Pancreas (tissue), 10 donors: ENCODE measurements at regions of chr4 and their contacts with region 1.

Region 1: GRCh38 chr4:85953651-85954018 is 406.2 kb downstream of the MAPK10 start:
- DNase-seq: no peak
- ATAC-seq: peak in 3 of 4 donors; percentile 20 to 55 (median 35)
- H3K4me3 ChIP-seq: no peak overlapping the region
- H3K27ac ChIP-seq: no peak overlapping the region
- H3K4me1 ChIP-seq: no peaks in the 10 kb centered on the region
- H3K27me3 ChIP-seq: no peaks in the 10 kb centered on the region
- CTCF ChIP-seq: no peak

Region 2: DNA sequence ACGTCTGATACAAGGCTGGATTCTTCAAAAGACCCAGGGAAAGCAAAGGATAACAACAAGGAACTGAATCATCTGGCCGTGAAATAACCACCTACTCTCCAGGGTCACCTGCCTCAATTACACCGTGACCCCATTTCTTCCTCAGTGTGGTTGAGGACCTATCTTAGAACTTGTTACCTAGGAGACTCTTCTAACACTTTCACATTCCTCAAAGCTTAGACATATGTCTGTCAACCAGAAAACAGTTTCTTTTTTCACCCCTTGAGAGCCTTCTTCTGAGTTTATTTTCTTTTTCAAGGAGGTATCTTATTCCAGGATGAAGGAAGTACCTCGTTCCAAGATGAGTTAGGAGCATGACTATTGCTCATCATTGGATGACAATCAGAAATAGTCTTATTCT is 140.9 kb before region 1 on chr4:
- intact Hi-C with region 1: loop called in 1 of 3 experiments (anchors 10 kb)
- DNase-seq: no peak
- ATAC-seq: no peak
- H3K4me3 ChIP-seq: no peak overlapping the region
- H3K27ac ChIP-seq: no peak overlapping the region
- H3K4me1 ChIP-seq: peaks cover 0 to 9% (median 0%) of the 10 kb centered on the region in 3 donors
- H3K27me3 ChIP-seq: no peaks in the 10 kb centered on the region
- CTCF ChIP-seq: no peak